Naive thymus-derived CD4-positive, alpha-beta T cell (primary cell): ENCODE measurements at regions of chr20 and their contacts with region 1.

Region 1: GRCh38 chr20:48620519-48621254 is 207.1 kb downstream of the PREX1 start:
- DNase-seq: peak; percentile 41 to 78 (median 59)
- ATAC-seq: peak; percentile 90
- H3K4me3 ChIP-seq: peak overlapping the region; percentile 38
- H3K4me3 Mint-ChIP-seq: peak overlapping the region; percentile 64 to 86 (median 76)
- H3K27ac ChIP-seq: no peak overlapping the region
- H3K27ac Mint-ChIP-seq: peak overlapping the region in 3 of 9 donors; percentile 47 to 78 (median 51)
- H3K4me1 ChIP-seq: peaks cover 7 to 11% of the 10 kb centered on the region in 2 donors
- H3K4me1 Mint-ChIP-seq: peaks cover 5 to 16% (median 7%) of the 10 kb centered on the region in 7 donors
- H3K27me3 ChIP-seq: no peaks in the 10 kb centered on the region
- H3K27me3 Mint-ChIP-seq: no peaks in the 10 kb centered on the region

Region 2: GRCh38 chr20:46757754-46758678 is 1862.7 kb before region 1 on chr20:
- CTCF ChIA-PET with region 1: no interaction called
- POLR2A ChIA-PET with region 1: no interaction called
- intact Hi-C with region 1: loop called in 1 of 2 experiments (anchors 10 kb)
- DNase-seq: peak in 8 of 9 donors; percentile 21 to 51 (median 42)
- ATAC-seq: peak; percentile 78
- H3K4me3 ChIP-seq: no peak overlapping the region
- H3K4me3 Mint-ChIP-seq: no peak overlapping the region
- H3K27ac ChIP-seq: no peak overlapping the region
- H3K27ac Mint-ChIP-seq: no peak overlapping the region
- H3K4me1 ChIP-seq: no peaks in the 10 kb centered on the region
- H3K4me1 Mint-ChIP-seq: peaks cover 4 to 10% (median 6%) of the 10 kb centered on the region in 7 donors
- H3K27me3 ChIP-seq: no peaks in the 10 kb centered on the region
- H3K27me3 Mint-ChIP-seq: peaks cover 0 to 13% (median 11%) of the 10 kb centered on the region in 5 donors

Region 3: GRCh38 chr20:47196091-47197081 is 1424.3 kb before region 1 on chr20:
- CTCF ChIA-PET with region 1: no interaction called
- POLR2A ChIA-PET with region 1: no interaction called
- intact Hi-C with region 1: loop called (anchors 1 to 5 kb)
- DNase-seq: peak; percentile 38 to 85 (median 54)
- ATAC-seq: peak; percentile 91
- H3K4me3 ChIP-seq: no peak overlapping the region
- H3K4me3 Mint-ChIP-seq: peak overlapping the region in 1 of 10 donors; percentile 38
- H3K27ac ChIP-seq: no peak overlapping the region
- H3K27ac Mint-ChIP-seq: no peak overlapping the region
- H3K4me1 ChIP-seq: no peaks in the 10 kb centered on the region
- H3K4me1 Mint-ChIP-seq: peaks cover 0 to 12% (median 0%) of the 10 kb centered on the region in 7 donors
- H3K27me3 ChIP-seq: no peaks in the 10 kb centered on the region
- H3K27me3 Mint-ChIP-seq: peaks cover 0 to 8% (median 0%) of the 10 kb centered on the region in 5 donors

Region 4: GRCh38 chr20:47663333-47664067 is 957.2 kb before region 1 on chr20:
- CTCF ChIA-PET with region 1: interaction called, 24 read pairs
- POLR2A ChIA-PET with region 1: no interaction called
- intact Hi-C with region 1: loop called (anchors 1 kb)
- DNase-seq: peak; percentile 60 to 79 (median 70)
- ATAC-seq: peak; percentile 88
- H3K4me3 ChIP-seq: no peak overlapping the region
- H3K4me3 Mint-ChIP-seq: peak overlapping the region in 1 of 10 donors; percentile 11
- H3K27ac ChIP-seq: no peak overlapping the region
- H3K27ac Mint-ChIP-seq: peak overlapping the region in 4 of 9 donors; percentile 28 to 75 (median 53)
- H3K4me1 ChIP-seq: no peaks in the 10 kb centered on the region
- H3K4me1 Mint-ChIP-seq: peaks cover 3 to 11% (median 6%) of the 10 kb centered on the region in 7 donors
- H3K27me3 ChIP-seq: no peaks in the 10 kb centered on the region
- H3K27me3 Mint-ChIP-seq: no peaks in the 10 kb centered on the region

Region 5: DNA sequence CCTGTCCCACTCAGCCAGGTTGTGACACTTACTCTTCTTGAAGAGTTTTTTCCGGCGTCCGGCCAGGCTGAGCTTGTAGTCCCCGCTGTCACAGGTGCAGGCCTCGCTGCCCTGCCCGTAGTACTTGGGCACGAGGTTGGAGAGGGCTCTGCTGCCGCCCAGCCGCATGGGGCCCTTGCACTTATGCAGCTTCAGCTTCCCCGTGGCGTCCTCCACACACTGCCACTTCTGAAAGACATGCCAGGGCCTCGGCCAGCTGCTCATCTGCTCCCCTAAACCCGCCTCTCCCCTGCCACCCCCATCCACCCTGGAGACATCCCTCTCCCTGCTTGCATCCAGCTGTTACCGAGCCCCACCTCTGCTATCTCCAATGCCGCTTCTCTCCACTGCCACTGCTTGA is 948.5 kb before region 1 on chr20:
- CTCF ChIA-PET with region 1: interaction called, 66 read pairs
- POLR2A ChIA-PET with region 1: no interaction called
- intact Hi-C with region 1: no loop called
- DNase-seq: no peak
- ATAC-seq: no peak
- H3K4me3 ChIP-seq: no peak overlapping the region
- H3K4me3 Mint-ChIP-seq: no peak overlapping the region
- H3K27ac ChIP-seq: no peak overlapping the region
- H3K27ac Mint-ChIP-seq: peak overlapping the region in 1 of 9 donors; percentile 43
- H3K4me1 ChIP-seq: no peaks in the 10 kb centered on the region
- H3K4me1 Mint-ChIP-seq: no peaks in the 10 kb centered on the region
- H3K27me3 ChIP-seq: no peaks in the 10 kb centered on the region
- H3K27me3 Mint-ChIP-seq: no peaks in the 10 kb centered on the region

Region 6: DNA sequence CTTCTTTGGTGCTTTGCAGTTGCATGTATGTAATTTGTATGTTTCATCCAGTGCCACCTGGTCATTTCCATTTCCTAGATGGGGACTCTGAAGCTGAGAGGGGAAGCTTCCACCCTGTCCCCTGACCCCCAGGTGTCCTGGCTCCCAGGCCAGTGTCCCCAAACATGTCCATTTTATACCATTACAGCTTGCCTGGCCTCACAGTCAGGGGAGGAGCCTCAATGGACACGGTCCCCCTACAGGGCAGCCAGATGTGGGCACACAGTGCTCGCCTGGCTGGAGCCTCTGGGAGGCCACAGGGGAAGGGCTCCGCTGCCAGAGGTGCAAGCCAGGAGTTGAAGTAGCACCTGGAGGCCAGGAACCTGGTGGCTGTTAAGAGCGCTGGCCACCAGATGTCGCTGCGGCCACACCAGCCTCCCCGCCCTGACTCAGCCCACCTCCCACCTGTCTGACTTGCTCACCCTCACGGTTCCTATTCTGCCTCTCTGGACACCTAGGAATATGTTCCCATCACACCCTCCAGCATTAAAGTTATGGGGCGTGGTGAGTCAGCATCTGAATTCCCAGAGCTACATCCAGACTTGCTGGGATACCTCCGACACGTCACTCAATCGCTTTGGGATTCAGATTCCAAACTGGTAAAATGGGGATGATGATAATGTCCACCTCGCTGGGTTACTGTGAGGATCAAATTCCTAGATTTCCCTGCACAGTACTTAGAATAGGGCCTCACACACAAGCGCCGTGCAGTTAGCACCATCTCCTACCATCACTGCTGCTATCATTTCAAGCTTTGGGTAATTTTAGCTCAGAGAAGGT is 942.8 kb before region 1 on chr20:
- CTCF ChIA-PET with region 1: interaction called, 66 read pairs
- POLR2A ChIA-PET with region 1: no interaction called
- intact Hi-C with region 1: loop called in 1 of 2 experiments (anchors 1 kb)
- DNase-seq: peak; percentile 18 to 67 (median 42)
- ATAC-seq: peak; percentile 63
- H3K4me3 ChIP-seq: no peak overlapping the region
- H3K4me3 Mint-ChIP-seq: no peak overlapping the region
- H3K27ac ChIP-seq: no peak overlapping the region
- H3K27ac Mint-ChIP-seq: peak overlapping the region in 2 of 9 donors; percentile 15 to 76
- H3K4me1 ChIP-seq: no peaks in the 10 kb centered on the region
- H3K4me1 Mint-ChIP-seq: peaks cover 0 to 5% (median 0%) of the 10 kb centered on the region in 7 donors
- H3K27me3 ChIP-seq: no peaks in the 10 kb centered on the region
- H3K27me3 Mint-ChIP-seq: peaks cover 0 to 3% (median 0%) of the 10 kb centered on the region in 5 donors

Region 7: GRCh38 chr20:47785854-47786764 is 834.6 kb before region 1 on chr20:
- CTCF ChIA-PET with region 1: no interaction called
- POLR2A ChIA-PET with region 1: no interaction called
- intact Hi-C with region 1: loop called (anchors 1 to 10 kb)
- DNase-seq: no peak
- ATAC-seq: peak; percentile 63
- H3K4me3 ChIP-seq: no peak overlapping the region
- H3K4me3 Mint-ChIP-seq: peak overlapping the region; percentile 51 to 87 (median 78)
- H3K27ac ChIP-seq: no peak overlapping the region
- H3K27ac Mint-ChIP-seq: peak overlapping the region in 1 of 9 donors; percentile 5
- H3K4me1 ChIP-seq: no peaks in the 10 kb centered on the region
- H3K4me1 Mint-ChIP-seq: peaks cover 7 to 23% (median 17%) of the 10 kb centered on the region in 7 donors
- H3K27me3 ChIP-seq: peaks cover 0 to 14% of the 10 kb centered on the region in 2 donors
- H3K27me3 Mint-ChIP-seq: peaks cover 64 to 77% (median 71%) of the 10 kb centered on the region in 5 donors

Region 8: DNA sequence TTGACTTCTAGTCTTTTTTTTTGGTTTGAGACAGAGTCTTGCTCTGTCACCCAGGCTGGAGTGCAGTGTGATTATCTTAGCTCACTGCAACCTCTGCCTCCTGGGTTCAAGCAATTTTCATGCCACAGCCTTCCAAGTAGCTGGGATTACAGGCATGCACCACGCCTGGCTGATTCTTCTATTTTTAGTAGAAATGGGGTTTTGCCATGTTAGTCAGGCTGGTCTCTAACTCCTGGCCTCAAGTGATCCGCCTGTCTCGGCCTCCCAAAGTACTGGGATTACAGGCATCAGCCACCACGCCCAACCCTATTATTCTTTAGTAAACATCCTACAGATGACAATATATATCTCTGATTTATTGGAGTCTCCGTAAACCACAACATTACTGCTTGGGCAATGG is 299.4 kb before region 1 on chr20:
- CTCF ChIA-PET with region 1: no interaction called
- POLR2A ChIA-PET with region 1: no interaction called
- intact Hi-C with region 1: no loop called
- DNase-seq: no peak
- ATAC-seq: no peak
- H3K4me3 ChIP-seq: no peak overlapping the region
- H3K4me3 Mint-ChIP-seq: no peak overlapping the region
- H3K27ac ChIP-seq: no peak overlapping the region
- H3K27ac Mint-ChIP-seq: no peak overlapping the region
- H3K4me1 ChIP-seq: no peaks in the 10 kb centered on the region
- H3K4me1 Mint-ChIP-seq: no peaks in the 10 kb centered on the region
- H3K27me3 ChIP-seq: no peaks in the 10 kb centered on the region
- H3K27me3 Mint-ChIP-seq: peaks cover 2 to 31% (median 27%) of the 10 kb centered on the region in 5 donors

Region 9: DNA sequence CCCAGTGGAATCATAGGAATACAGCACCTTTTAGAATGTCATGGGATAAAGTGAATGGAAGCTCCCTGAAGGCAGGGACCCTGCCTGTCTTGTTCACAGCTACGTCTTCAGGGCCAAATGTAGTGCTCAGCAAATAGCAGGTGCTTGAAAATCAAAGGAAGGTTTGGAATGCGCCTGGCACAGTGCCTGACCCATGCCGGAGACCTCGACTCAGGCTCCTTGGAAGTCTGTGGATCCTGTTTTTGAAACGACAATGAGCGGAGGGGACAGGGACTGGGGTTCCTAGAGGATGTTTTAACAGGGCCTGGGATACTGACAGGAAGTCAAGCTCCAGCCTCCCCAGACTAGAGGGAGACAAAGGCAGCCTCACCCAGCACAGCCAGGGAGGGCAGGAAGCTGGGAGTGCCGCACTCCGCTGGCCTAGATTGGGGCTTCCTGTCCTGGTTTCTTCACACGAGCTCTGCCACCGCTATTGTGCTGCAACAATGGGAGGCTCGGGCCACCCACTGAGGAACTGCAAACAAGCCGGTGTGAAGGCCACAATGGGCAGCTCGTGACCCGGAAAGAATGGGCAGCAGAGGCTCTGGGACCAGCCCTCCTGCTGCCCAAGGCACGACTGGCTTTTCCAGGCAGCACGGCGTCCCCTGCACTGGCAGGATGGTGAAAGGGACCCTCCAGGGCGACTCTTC is 130.4 kb after region 1 on chr20:
- CTCF ChIA-PET with region 1: no interaction called
- POLR2A ChIA-PET with region 1: no interaction called
- intact Hi-C with region 1: no loop called
- DNase-seq: peak in 3 of 9 donors; percentile 9 to 13 (median 9)
- ATAC-seq: peak; percentile 82
- H3K4me3 ChIP-seq: peak overlapping the region; percentile 29
- H3K4me3 Mint-ChIP-seq: peak overlapping the region in 7 of 10 donors; percentile 20 to 66 (median 51)
- H3K27ac ChIP-seq: no peak overlapping the region
- H3K27ac Mint-ChIP-seq: peak overlapping the region in 4 of 9 donors; percentile 4 to 85 (median 76)
- H3K4me1 ChIP-seq: peaks cover 22 to 47% of the 10 kb centered on the region in 2 donors
- H3K4me1 Mint-ChIP-seq: peaks cover 26 to 67% (median 45%) of the 10 kb centered on the region in 7 donors
- H3K27me3 ChIP-seq: no peaks in the 10 kb centered on the region
- H3K27me3 Mint-ChIP-seq: no peaks in the 10 kb centered on the region